ENCODE measurements at regions of chr14 and their contacts with region 1.

Region 1: GRCh38 chr14:69242311-69243224 is 17.4 kb upstream of the GALNT16 start:
- DNase-seq: peak; percentile 83
- H3K4me3 ChIP-seq: no peak overlapping the region
- H3K27ac ChIP-seq: no peak overlapping the region
- H3K4me1 ChIP-seq: peaks cover under 1 to 4% of the 10 kb centered on the region in 2 experiments; a peak in 3 of 4 replicates
- H3K27me3 ChIP-seq: no peaks in the 10 kb centered on the region
- CTCF ChIP-seq: peak; percentile 80
- EP300 ChIP-seq: no peak
- RAD21 ChIP-seq: peak; percentile 86

Region 2: DNA sequence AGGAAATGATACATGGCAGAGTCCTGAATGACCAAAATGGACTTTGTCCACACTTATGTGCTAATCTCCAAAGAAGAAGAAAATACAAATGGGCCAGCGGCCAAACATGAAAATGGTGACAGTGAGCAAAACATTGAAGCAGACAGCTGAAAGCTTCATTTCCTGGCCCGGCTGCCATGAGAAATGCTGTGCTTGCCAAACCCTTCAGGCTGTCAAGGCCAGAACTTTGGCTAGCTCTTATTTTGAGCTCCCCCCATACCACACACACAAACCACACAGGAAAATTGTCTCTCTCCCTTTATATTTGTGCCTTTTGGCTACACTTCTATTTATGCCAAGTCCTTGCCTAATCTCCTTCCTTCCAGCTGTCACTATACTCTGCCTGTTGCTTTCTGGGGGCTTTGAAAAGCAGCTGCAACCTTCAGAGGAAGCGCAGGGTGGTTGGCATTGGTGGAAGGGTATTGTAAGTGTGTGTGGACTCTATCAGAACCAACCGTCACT is 1099.2 kb before region 1 on chr14:
- CTCF ChIA-PET with region 1: no interaction called
- POLR2A ChIA-PET with region 1: no interaction called
- DNase-seq: no peak
- H3K4me3 ChIP-seq: no peak overlapping the region
- H3K27ac ChIP-seq: peak overlapping the region; percentile 95 to 100
- H3K4me1 ChIP-seq: peaks cover 14 to 81% of the 10 kb centered on the region in 2 experiments
- H3K27me3 ChIP-seq: no peaks in the 10 kb centered on the region
- CTCF ChIP-seq: no peak
- EP300 ChIP-seq: peak; percentile 83 to 96
- RAD21 ChIP-seq: no peak

Region 3: DNA sequence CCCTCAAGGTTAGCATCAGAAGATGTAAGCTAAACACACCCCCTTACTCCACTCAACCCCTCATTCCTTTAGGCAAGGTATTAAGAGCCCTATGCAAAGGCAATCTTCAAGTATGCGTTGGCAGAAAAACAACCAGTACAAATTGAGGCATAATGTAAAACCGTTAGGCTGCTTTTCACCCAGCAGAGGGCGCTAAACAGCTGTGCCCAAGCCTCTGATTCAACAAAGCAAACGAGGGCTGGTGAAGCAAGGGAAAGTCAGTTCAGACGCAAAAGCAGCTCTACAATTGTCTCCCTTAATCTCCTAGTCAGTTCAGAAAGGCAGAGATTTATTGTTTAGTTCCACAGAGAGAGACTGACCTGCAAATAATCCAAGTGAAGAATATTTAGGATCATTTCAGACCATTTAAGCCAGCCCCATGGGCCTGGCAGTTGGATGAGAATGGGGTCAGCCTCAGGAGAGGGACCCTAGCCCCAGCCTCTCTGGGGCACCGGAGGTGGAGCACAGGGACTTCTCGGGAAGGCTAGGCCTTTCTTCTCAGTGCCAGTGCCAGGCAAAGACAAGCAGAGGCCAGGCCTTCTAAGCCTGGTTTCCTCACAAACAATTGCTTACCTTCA is 113.2 kb before region 1 on chr14:
- CTCF ChIA-PET with region 1: interaction called, 27 read pairs
- POLR2A ChIA-PET with region 1: no interaction called
- DNase-seq: peak; percentile 55
- H3K4me3 ChIP-seq: peak overlapping the region in 1 of 2 experiments; percentile 8; a peak in 1 of 4 replicates
- H3K27ac ChIP-seq: peak overlapping the region; percentile 46 to 64
- H3K4me1 ChIP-seq: peaks cover 24 to 28% of the 10 kb centered on the region in 2 experiments
- H3K27me3 ChIP-seq: no peaks in the 10 kb centered on the region
- CTCF ChIP-seq: peak; percentile 97
- EP300 ChIP-seq: no peak
- RAD21 ChIP-seq: peak; percentile 93

Region 4: DNA sequence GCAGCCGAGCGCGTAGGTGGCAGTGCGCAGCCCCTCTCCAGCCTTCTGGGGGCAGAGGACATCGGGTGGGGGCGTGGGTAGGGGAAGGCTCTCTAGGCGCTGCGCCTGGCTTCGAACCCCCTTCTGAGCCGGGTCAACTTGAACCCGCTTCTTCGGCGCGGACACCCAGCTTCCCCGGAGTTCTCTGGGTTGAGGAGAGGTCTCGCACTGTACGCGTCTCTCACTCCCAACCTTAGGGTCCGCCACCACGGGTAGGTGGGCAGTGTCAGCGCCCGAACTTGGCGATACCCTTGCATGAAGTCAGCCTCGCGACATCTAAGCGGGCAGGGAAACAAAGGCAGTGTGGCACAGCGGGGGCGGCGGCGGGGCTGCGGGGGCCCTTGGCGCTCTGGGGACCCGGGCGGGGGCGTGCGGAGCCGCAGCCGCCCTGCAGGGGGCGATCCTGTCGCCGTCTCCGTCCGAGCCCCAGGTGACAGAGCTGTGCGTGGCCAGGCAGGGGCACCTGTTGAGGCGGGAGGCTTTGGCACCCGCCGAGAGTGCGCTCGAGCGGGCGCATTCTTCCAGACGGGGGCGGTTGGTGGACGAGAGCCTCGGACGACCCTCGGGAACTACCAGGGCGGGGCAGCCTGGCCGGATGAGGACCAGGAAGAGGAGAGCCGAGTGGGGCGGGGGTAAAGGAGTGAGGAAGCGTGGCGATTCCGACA is 18.4 kb after region 1 on chr14:
- CTCF ChIA-PET with region 1: interaction called, 44 read pairs
- POLR2A ChIA-PET with region 1: no interaction called
- DNase-seq: peak; percentile 91
- H3K4me3 ChIP-seq: peak overlapping the region; percentile 68 to 71
- H3K27ac ChIP-seq: no peak overlapping the region
- H3K4me1 ChIP-seq: peaks cover 13 to 31% of the 10 kb centered on the region in 2 experiments; a peak in 2 of 4 replicates
- H3K27me3 ChIP-seq: no peaks in the 10 kb centered on the region
- CTCF ChIP-seq: peak; percentile 62
- EP300 ChIP-seq: no peak
- RAD21 ChIP-seq: peak; percentile 44

Region 5: DNA sequence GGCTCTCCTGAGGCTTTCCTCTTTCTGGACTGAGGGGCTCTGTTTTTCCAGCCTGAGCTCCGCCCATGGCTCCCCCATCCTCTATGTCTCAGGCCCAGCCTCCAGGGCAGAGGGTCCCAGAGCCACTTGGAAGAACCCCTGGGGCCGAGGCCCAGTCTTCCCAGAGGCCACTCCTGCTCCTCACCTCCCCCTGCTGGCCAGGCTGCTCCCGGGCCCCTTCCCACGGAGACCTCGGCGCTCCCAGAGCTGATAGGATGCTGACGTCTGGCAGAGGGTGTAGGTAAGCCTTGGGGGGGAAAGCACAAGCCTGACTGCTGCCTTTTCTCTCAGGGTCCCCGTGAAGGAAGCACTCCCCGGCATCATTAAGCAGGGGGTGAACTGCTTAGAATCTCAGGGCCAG is 104.1 kb after region 1 on chr14:
- CTCF ChIA-PET with region 1: interaction called, 10 read pairs
- POLR2A ChIA-PET with region 1: no interaction called
- DNase-seq: peak; percentile 56
- H3K4me3 ChIP-seq: no peak overlapping the region
- H3K27ac ChIP-seq: no peak overlapping the region
- H3K4me1 ChIP-seq: peaks cover 0 to 2% of the 10 kb centered on the region in 2 experiments; a peak in 1 of 4 replicates
- H3K27me3 ChIP-seq: no peaks in the 10 kb centered on the region
- CTCF ChIP-seq: peak; percentile 53
- EP300 ChIP-seq: no peak
- RAD21 ChIP-seq: peak; percentile 39; the same call in 1 of the 2 replicates

Region 6: DNA sequence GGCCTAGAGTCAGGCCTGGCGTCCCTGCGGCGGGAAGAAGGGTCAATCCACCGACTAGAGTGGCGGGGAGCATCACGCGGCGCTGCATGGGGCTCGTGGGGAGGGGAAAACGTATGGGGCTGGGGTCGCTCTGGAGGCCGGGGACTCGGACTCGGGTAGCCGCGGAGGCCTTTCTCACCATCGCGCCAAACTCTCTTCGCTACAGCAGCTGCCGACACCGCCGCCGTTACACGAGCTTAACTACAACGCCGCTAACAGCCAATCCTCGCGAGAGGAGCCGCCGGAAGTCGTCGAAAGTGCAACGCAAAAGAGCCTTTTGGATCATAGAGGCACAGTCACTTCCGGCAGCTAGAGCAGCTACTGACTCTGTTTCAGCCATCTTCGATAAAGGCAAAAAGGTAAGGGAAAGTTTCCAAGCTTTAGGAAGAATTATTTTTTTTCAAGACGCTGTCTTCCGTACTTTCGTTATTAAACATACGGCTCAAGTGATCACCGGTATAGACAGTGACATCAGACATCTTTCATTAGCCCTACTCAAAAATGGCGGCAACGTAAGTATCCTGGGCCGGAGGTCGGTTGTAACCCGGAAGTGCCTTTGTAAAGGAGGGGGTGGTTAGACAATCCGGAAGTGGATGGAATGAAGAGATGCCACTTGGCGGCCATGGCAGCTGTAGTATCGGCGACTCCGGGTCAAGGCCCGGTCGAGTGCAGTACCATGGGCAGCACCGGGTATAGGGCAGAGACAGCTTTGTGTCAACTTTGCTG is 155.7 kb after region 1 on chr14 and contains the starts of genes ERH and SLC39A9:
- CTCF ChIA-PET with region 1: interaction called, 13 read pairs
- POLR2A ChIA-PET with region 1: no interaction called
- DNase-seq: peak; percentile 91
- H3K4me3 ChIP-seq: peak within 1 kb of the TSS; percentile 83 to 93
- H3K27ac ChIP-seq: peak within 1 kb of the TSS; percentile 93 to 98
- H3K4me1 ChIP-seq: peaks cover 13 to 25% of the 10 kb centered on the region in 2 experiments; a peak in 3 of 4 replicates
- H3K27me3 ChIP-seq: no peaks in the 10 kb centered on the region
- CTCF ChIP-seq: no peak
- EP300 ChIP-seq: 0 out of 4 replicates have a peak, but pooled peaks of 1 of the 2 experiments have one; percentile 10
- RAD21 ChIP-seq: no peak
- polyA plus RNA-seq, gene ERH: 186 and 228 TPM in 2 replicates
- polyA plus RNA-seq, gene SLC39A9: 39.8 and 68.9 TPM in 2 replicates

Region 7: DNA sequence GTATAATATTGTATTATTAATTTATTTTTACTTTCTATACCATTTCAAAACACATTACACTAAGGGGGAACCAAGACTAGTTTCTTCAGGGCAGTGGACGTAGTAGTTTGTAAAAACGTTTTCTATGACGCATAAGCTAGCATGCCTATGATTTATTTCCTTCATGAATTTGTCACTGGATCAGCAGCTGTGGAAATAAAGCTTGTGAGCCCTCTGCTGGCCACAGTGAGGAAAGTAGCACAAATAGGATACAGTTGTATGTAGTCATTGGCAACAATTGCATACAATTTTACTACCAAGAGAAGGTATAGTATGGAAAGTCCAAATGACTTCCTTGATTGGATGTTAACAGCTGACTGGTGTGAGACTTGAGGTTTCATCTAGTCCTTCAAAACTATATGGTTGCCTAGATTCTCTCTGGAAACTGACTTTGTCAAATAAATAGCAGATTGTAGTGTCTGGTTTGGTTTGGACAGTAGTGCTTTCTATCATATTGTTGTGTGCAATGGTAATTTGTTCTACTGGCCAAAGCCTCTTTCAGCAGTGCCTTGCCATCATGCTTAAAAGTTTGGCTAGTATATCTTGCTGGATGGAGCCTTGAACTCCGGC is 217.6 kb after region 1 on chr14:
- CTCF ChIA-PET with region 1: interaction called, 32 read pairs
- POLR2A ChIA-PET with region 1: no interaction called
- DNase-seq: peak; percentile 70
- H3K4me3 ChIP-seq: no peak overlapping the region; a peak in 1 of 4 replicates
- H3K27ac ChIP-seq: peak overlapping the region in 1 of 2 experiments; percentile 47; a peak in 1 of 4 replicates
- H3K4me1 ChIP-seq: peaks cover 0 to 6% of the 10 kb centered on the region in 2 experiments; a peak in 1 of 4 replicates
- H3K27me3 ChIP-seq: no peaks in the 10 kb centered on the region
- CTCF ChIP-seq: peak; percentile 87
- EP300 ChIP-seq: no peak
- RAD21 ChIP-seq: peak; percentile 84

Measured in SK-N-SH (cell line).